ENCODE measurements at regions of chr1 and their contacts with region 1.

Region 1: GRCh38 chr1:203216274-203217138 is 13.0 kb downstream of the CHIT1 start:
- DNase-seq: peak in 3 of 5 donors; percentile 42 to 58 (median 49)
- ATAC-seq: peak; percentile 40 to 88 (median 64)
- H3K4me3 ChIP-seq: no peak overlapping the region
- H3K27ac ChIP-seq: no peak overlapping the region
- H3K4me1 ChIP-seq: peaks cover 0 to 4% (median 0%) of the 10 kb centered on the region in 12 donors
- H3K27me3 ChIP-seq: peaks cover 0 to 9% (median 0%) of the 10 kb centered on the region in 9 donors
- CTCF ChIP-seq: peak; percentile 69 to 88 (median 82)
- POLR2A ChIP-seq: no peak

Region 2: DNA sequence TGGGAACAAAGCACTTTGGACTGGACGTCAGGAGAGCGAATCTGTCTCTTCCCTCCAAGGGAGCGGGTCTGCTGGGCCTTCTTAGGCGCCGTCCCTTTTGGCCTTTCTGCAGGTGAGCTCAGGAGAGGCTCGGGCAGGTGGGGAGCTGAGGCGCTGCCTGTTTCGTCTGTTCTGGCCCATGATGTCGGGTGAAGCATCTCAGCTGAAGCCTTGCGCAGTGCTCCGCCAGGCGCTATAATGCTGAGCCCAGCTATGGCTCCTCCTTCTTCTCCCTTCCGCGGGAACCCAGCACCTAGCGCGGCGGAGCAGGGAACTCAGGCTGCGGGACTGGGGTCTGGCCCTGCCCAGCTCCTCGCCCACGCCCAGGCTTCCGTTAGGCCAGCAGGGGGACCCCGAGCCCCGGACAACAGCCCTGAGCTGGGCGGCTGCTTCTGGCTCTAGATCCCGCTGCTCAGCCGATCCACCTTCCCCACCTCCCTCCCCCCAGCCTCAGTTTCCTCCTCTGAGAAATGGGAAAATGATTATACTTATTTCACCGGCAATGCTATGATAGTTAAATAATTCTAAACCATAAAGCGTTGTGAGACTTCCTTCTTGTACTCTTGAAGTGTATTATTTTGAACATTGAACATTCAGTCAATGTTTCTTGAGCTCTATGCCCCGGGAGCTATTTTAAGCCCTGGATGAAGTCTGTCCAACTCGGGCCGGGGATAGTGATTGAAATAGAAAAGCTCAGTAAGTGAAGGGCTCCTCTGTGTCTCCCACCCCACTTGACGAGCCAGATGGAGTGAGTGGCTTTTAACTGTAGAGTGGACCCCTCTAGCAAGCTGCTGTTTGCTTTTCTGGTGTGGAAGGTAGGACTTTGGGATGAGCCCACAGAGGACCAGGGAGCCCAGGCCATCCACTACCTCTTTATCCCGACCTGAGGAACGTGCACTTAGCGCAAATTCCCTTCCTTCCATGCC is 98.6 kb before region 1 on chr1:
- intact Hi-C with region 1: loop called (anchors 1 to 5 kb)
- DNase-seq: peak; percentile 74 to 87 (median 80)
- ATAC-seq: peak; percentile 83 to 97 (median 94)
- H3K4me3 ChIP-seq: no peak overlapping the region
- H3K27ac ChIP-seq: no peak overlapping the region
- H3K4me1 ChIP-seq: peaks cover 0 to 11% (median 3%) of the 10 kb centered on the region in 12 donors
- H3K27me3 ChIP-seq: peaks cover 0 to 54% (median 12%) of the 10 kb centered on the region in 9 donors
- CTCF ChIP-seq: peak; percentile 61 to 83 (median 78)
- POLR2A ChIP-seq: no peak

Region 3: GRCh38 chr1:203172128-203173010 is 44.1 kb before region 1 on chr1:
- intact Hi-C with region 1: loop called in 1 of 10 experiments (anchors 5 kb)
- DNase-seq: peak; percentile 48 to 78 (median 63)
- ATAC-seq: peak; percentile 60 to 82 (median 68)
- H3K4me3 ChIP-seq: no peak overlapping the region
- H3K27ac ChIP-seq: no peak overlapping the region
- H3K4me1 ChIP-seq: peaks cover 0 to 15% (median 0%) of the 10 kb centered on the region in 12 donors
- H3K27me3 ChIP-seq: no peaks in the 10 kb centered on the region
- CTCF ChIP-seq: peak; percentile 71 to 87 (median 78)
- POLR2A ChIP-seq: no peak

Region 4: DNA sequence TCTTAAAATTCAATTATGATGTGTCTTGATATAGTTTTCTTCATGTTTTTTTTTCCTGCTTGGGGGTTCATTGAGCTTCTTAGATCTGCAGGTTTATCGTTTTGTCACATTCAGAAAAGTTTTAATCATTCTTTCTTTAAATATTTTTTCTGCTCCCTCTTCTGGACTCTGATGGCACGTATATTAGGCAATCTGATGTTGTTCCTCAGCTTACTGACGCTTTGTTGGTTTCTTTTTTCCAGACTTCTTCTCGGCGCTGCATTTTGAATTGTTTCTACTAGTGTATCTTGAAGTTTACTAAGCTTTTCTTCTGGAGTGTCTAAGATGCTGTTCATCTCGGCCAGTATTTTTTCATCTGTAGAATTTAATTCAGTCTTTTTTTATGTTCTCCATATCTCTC is 179.2 kb after region 1 on chr1:
- intact Hi-C with region 1: no loop called
- DNase-seq: no peak
- ATAC-seq: no peak
- H3K4me3 ChIP-seq: peak overlapping the region in 1 of 12 donors; percentile 38
- H3K27ac ChIP-seq: no peak overlapping the region
- H3K4me1 ChIP-seq: no peaks in the 10 kb centered on the region
- H3K27me3 ChIP-seq: peaks cover 0 to 2% (median 0%) of the 10 kb centered on the region in 9 donors
- CTCF ChIP-seq: peak in 1 of 12 donors; percentile 17
- POLR2A ChIP-seq: no peak

Measured in heart left ventricle (tissue), 16 donors.